ENCODE measurements at regions of chr11 and their contacts with region 1.

Region 1: GRCh38 chr11:73965076-73965860 is 14.4 kb downstream of the DNAJB13 start:
- DNase-seq: no peak
- ATAC-seq: no peak
- H3K4me3 ChIP-seq: no peak overlapping the region
- H3K27ac ChIP-seq: no peak overlapping the region
- H3K4me1 ChIP-seq: no peaks in the 10 kb centered on the region
- H3K27me3 ChIP-seq: no peaks in the 10 kb centered on the region
- CTCF ChIP-seq: no peak
- POLR2A ChIP-seq: no peak

Region 2: DNA sequence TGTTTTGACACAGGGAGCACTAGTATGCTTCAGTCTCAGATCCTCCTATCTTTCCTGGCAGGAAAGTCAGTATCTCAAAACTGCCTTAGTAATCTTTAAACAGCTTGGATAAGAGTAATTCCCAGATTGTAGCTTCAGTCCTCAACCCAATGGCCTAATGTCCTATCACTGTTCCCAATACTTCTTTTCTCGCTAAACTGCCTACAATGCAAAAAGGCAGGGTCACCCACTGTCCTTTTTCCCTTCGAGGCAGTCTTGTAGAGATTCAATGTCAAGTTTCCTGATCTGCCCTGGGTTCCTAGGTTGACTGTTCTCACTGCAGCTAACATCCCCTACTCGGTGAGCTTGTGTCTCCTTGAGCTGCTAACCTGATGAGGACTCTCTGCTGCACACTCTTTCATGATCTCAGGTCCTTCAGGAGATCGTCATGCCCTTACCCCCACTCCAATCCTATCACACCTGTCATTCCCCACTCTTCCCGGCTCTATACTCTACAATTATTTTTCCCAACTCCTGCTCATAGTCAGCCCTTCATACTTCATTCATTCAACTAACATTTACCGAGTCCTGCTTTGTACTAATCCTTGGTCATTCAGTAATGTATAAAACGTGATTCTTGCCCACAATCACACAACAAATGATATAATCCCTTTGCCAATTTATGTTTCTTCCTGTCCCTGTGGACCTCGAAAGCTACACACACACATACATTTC is 204.6 kb after region 1 on chr11:
- intact Hi-C with region 1: loop called (anchors 10 kb)
- DNase-seq: no peak
- ATAC-seq: no peak
- H3K4me3 ChIP-seq: peak overlapping the region; percentile 49 to 92
- H3K27ac ChIP-seq: peak overlapping the region in 3 of 4 donors; percentile 78 to 88 (median 79)
- H3K4me1 ChIP-seq: peaks cover 37% of the 10 kb centered on the region
- H3K27me3 ChIP-seq: no peaks in the 10 kb centered on the region
- CTCF ChIP-seq: no peak
- POLR2A ChIP-seq: no peak

Measured in body of pancreas (tissue), 4 donors.